AG04449 (cell line): ENCODE measurements at regions of chr3 and their contacts with region 1.

Region 1: DNA sequence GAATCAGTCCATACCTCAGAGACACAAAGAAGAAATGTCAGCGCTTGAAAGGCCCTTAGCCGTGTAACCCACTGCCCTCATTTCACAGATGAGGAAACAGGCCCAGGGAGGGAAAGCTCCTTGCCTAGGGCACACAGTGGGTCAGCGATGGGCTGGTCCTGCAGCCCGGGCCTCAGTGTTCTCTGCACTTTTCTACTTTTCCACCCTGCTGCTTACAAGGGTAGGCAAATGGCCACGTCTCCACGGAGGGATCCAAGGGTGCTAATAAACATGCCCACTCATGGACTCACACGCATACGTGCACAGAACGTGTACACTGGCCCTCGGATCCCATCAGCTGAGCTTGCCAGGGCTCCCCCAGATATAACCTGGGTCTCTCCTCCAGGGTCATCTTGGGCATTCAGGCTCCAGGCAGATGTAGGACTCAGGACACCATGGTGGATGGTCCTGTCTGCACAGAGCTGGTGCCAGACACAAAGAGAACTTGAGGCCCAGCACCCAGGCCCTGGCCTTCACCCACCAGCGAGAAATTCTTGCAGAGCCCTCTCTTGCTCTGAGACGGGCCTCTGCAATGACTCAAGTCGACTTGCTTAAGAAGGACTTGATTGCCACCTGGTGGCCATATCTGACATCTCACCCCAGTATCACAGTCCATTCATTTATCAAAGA is 34.5 kb upstream of the VPS8 start:
- DNase-seq: peak; percentile 92
- H3K4me3 ChIP-seq: no peak overlapping the region
- CTCF ChIP-seq: peak; percentile 62

Region 2: GRCh38 chr3:184549793-184550577 is 227.5 kb before region 1 on chr3:
- CTCF ChIA-PET with region 1: interaction called, 57 read pairs
- POLR2A ChIA-PET with region 1: no interaction called
- DNase-seq: no peak
- H3K4me3 ChIP-seq: no peak overlapping the region
- CTCF ChIP-seq: no peak

Region 3: GRCh38 chr3:184583578-184584425 is 193.7 kb before region 1 on chr3:
- CTCF ChIA-PET with region 1: interaction called, 10 read pairs
- POLR2A ChIA-PET with region 1: no interaction called
- DNase-seq: no peak
- H3K4me3 ChIP-seq: peak overlapping the region; percentile 29
- CTCF ChIP-seq: peak; percentile 9

Region 4: GRCh38 chr3:184748219-184749135 is 29.0 kb before region 1 on chr3:
- CTCF ChIA-PET with region 1: interaction called, 10 read pairs
- POLR2A ChIA-PET with region 1: no interaction called
- DNase-seq: no peak
- H3K4me3 ChIP-seq: no peak overlapping the region
- CTCF ChIP-seq: peak; percentile 39

Region 5: GRCh38 chr3:184805351-184806038 is 28.0 kb after region 1 on chr3:
- CTCF ChIA-PET with region 1: interaction called, 146 read pairs
- POLR2A ChIA-PET with region 1: no interaction called
- DNase-seq: no peak
- H3K4me3 ChIP-seq: no peak overlapping the region
- CTCF ChIP-seq: no peak